ENCODE measurements at regions of chr6 and their contacts with region 1.

Region 1: GRCh38 chr6:45714741-45715507 is 300.7 kb downstream of the CLIC5 start:
- DNase-seq: peak; percentile 20 to 69 (median 44)
- ATAC-seq: peak; percentile 94
- H3K4me3 ChIP-seq: no peak overlapping the region
- H3K27ac ChIP-seq: no peak overlapping the region
- H3K4me1 ChIP-seq: no peaks in the 10 kb centered on the region; a peak in 1 of 5 replicates
- H3K27me3 ChIP-seq: peaks cover 21 to 40% of the 10 kb centered on the region in 2 experiments
- CTCF ChIP-seq: peak; percentile 74 to 87 (median 77)
- EP300 ChIP-seq: no peak
- POLR2A ChIP-seq: no peak
- RAD21 ChIP-seq: peak; percentile 94 to 97

Region 2: GRCh38 chr6:44630125-44631028 is 1084.5 kb before region 1 on chr6:
- CTCF ChIA-PET with region 1: no interaction called
- POLR2A ChIA-PET with region 1: no interaction called
- in situ Hi-C with region 1: no loop called
- intact Hi-C with region 1: loop called (anchors 1 kb)
- DNase-seq: peak; percentile 68 to 81 (median 74)
- ATAC-seq: peak; percentile 96
- H3K4me3 ChIP-seq: no peak overlapping the region
- H3K27ac ChIP-seq: no peak overlapping the region
- H3K4me1 ChIP-seq: no peaks in the 10 kb centered on the region
- H3K27me3 ChIP-seq: peaks cover 7 to 54% of the 10 kb centered on the region in 2 experiments
- CTCF ChIP-seq: peak; percentile 71 to 74 (median 74)
- EP300 ChIP-seq: no peak
- POLR2A ChIP-seq: no peak
- RAD21 ChIP-seq: peak; percentile 78 to 80

Region 3: DNA sequence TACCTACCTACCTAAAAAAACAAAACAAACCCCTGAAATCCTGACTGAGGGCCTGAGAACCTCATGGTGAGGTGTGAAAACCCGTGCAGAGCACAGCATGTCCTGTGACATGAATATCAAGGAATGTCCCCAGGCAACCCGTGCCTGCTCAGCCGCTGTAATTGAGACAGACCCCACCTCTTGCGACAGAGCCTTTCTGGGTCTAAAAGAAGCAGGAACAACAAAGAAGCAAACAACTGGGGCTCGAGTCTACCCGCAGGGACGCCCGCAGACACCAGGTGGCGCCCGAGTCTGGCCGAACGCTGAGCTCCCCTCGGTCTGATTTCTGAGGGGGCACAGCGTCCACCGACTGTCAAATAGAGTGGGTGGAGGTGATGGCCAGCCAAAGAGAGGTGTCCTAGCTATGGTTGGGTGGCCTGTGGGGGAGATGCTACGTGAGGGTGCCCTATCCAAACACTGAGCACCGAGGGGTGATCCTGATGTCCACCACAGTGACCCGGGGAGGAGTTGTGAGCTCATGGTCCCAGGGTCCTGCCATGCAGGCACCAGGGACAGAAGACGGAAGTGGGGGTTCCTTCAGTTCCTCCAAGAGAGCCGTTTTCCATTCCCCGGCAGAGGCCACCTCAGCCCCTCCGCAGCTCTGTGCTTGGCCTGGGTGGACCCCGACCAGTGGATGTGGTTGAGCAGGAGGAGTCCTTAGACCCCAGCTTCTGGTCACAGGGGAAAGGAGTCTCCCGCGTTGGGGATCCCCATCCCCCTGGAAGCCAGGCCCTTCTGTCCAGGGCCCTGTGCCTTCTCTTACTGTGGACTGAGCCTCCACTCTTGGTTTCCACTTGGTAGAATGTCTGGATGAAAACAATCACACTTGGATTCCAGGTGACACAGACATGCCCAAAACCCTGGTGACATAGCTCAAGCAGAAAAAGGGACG is 1059.2 kb before region 1 on chr6:
- CTCF ChIA-PET with region 1: interaction called, 11 read pairs
- POLR2A ChIA-PET with region 1: interaction called, 3 read pairs
- in situ Hi-C with region 1: loop called (anchors 10 kb)
- intact Hi-C with region 1: loop called (anchors 1 kb)
- DNase-seq: peak; percentile 72 to 81 (median 76)
- ATAC-seq: peak; percentile 93
- H3K4me3 ChIP-seq: no peak overlapping the region
- H3K27ac ChIP-seq: no peak overlapping the region
- H3K4me1 ChIP-seq: 0 out of 5 replicates have a peak, but pooled peaks cover 0 to 4% of the 10 kb centered on the region in 2 experiments
- H3K27me3 ChIP-seq: peaks cover 18 to 79% of the 10 kb centered on the region in 2 experiments
- CTCF ChIP-seq: peak; percentile 90 to 99 (median 93)
- EP300 ChIP-seq: no peak
- POLR2A ChIP-seq: no peak
- RAD21 ChIP-seq: peak; percentile 97 to 98

Region 4: DNA sequence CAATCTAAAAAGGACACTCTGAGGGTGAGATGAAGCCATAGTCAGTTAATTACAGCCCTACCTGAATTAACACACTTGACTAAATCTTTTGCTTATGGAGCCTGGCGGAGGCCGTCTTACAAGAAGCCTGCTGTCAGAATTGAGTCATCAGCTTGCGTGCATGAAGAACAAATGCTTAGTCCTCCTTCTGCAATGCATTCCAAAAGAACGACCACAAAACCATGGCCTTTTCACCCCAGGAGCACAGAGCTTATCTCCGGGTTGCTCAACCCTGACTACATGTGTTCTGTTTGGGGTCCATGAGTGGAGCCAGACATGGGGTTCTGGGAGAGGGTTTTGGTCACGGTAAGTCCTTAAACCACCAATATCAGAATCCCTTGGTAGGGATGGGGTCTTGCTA is 17.3 kb before region 1 on chr6:
- CTCF ChIA-PET with region 1: no interaction called
- POLR2A ChIA-PET with region 1: no interaction called
- in situ Hi-C with region 1: no loop called
- intact Hi-C with region 1: no loop called
- DNase-seq: peak in 1 of 4 experiments; percentile 5
- ATAC-seq: no peak
- H3K4me3 ChIP-seq: no peak overlapping the region
- H3K27ac ChIP-seq: no peak overlapping the region
- H3K4me1 ChIP-seq: no peaks in the 10 kb centered on the region
- H3K27me3 ChIP-seq: peaks cover 0 to 12% of the 10 kb centered on the region in 2 experiments; a peak in 3 of 5 replicates
- CTCF ChIP-seq: no peak
- EP300 ChIP-seq: no peak
- POLR2A ChIP-seq: no peak
- RAD21 ChIP-seq: no peak

Measured in K562 (cell line).